ENCODE measurements at regions of chr3 and their contacts with region 1.

Region 1: DNA sequence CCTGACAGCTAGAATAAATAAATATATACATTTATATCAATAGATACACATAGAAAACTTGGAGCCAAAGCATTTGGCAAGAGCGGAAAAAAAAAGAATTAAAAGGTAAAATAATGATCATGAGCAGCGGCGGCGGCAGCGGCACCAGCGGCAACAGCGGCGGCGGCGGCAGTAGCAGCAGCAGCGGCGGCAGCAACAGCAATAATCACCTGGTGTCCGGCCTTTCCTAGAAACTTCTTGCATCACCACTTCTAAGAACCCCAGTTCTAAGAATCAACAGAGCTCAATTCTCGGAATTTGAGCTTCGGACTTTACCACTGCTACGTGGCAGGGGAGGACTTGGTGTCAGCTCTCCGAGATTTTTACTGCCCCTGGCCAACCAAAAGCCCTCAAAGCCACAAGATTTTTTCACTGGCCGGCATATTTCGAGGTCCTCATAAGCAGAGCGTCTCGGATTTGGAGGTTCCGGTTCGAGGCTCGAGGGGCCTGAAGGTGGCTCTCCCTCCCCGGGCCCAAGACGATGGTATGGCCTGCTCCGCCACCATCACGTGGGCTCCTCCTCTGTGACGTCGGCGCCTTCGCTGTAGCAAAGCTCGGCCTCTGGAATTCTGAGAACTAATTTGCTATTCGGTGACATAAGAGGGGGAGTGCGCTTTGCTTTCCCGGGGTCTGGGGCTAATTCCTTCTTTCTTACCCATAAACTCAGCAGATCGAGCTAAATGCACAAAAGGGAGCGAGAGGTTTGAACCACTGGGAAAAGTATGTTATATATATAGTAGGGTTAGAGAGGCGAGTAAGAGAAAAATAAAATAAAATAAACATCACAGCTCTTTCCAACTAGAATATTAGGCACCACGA is at the start of gene BCL6:
- DNase-seq: peak in 1 of 2 donors; percentile 98
- H3K4me3 ChIP-seq: peak within 1 kb of the TSS; percentile 52 to 77
- H3K27ac ChIP-seq: peak within 1 kb of the TSS; percentile 99
- H3K4me1 ChIP-seq: peaks cover 18% of the 10 kb centered on the region
- H3K27me3 ChIP-seq: no peaks in the 10 kb centered on the region
- CTCF ChIP-seq: peak in 1 of 3 experiments; percentile 15
- POLR2A ChIP-seq: peak; percentile 75 to 100
- total RNA-seq, gene BCL6: 133 TPM

Region 2: DNA sequence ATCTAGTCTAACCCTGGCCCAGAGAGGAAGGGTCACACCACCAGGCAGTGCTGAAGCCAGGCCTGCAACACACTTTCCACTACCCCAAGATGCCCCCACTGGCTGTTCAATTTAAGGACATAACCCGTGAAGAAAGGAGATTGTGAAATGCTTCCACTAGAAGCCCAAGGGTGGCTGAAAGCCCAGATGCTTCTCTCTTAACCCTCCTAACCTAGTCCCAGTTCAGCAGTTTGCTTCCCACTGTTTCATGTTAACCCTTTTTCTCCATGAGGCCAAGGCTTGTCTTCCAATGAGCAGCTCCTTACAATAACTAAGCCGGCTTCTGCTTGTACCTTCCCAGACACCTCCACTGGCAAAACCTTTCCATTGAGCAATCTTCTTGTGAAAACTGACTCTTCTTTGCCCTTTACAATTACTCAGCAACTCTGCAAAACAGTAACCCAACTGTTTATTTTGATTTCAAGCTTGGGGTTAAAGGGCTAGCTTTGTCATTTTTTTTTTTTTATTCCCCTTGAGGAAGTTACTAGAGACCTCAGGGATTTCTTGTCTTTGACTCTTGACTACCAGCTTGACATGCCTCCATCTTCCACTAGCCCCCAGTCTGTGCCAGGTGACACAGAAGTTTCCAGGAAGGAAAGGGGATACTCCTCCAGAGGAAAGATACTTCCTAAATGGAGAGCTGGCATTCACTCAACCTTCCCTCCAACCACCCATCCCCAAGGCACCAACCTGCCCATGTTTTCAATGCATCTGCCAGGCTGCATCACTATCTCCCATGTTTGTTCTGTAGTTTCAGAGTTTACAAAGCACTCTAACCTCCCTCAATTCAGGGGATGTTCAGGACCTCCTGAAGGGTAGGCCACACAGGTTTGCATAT is 209.9 kb after region 1 on chr3:
- intact Hi-C with region 1: loop called (anchors 5 kb)
- DNase-seq: peak in 1 of 2 donors; percentile 92
- H3K4me3 ChIP-seq: no peak overlapping the region
- H3K27ac ChIP-seq: no peak overlapping the region
- H3K4me1 ChIP-seq: no peaks in the 10 kb centered on the region
- H3K27me3 ChIP-seq: no peaks in the 10 kb centered on the region
- CTCF ChIP-seq: no peak
- POLR2A ChIP-seq: no peak

Region 3: DNA sequence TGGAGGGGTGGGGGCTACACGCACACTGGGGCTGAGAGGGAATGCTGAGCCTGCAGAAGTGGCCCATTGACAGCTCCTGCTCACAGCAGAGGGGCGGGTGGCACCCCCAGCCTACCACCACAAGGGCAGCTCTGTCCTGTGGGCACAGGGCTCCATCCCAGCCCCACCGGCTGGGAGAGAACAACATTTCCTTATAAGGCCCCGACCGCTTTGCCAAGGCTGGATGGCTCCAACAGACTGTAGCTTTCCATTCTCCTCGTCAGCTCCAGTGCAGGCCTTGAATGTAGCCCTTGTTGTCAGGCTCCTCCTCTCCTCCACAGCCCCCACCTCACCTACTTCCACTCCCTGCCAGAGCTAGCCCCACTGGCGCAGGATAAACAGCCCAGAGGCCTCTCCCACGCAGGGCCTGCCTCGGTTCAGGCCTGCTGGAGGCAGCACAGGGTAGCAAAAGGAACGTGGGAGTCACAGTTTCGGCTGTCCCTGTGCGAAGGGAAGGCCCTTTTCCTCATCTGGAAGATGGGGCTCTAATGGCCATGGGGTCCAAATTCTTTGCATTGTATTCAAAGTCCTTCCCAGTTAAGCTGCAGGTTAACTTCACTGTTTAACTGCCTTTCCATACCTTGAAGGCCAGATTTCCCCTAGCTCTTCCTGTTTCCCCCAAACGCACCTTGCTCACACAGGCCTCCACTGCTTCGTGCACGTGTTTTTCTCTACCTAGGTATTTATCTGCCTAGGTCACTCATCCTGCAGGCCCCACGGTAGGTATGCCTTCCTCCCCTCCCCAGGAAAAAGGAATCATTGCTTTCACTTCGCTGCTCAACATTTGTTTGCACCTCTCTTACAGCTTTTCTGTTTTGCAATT is 307.0 kb after region 1 on chr3:
- intact Hi-C with region 1: loop called (anchors 5 kb)
- DNase-seq: no peak
- H3K4me3 ChIP-seq: no peak overlapping the region
- H3K27ac ChIP-seq: peak overlapping the region; percentile 78
- H3K4me1 ChIP-seq: peaks cover 11% of the 10 kb centered on the region
- H3K27me3 ChIP-seq: no peaks in the 10 kb centered on the region
- CTCF ChIP-seq: no peak
- POLR2A ChIP-seq: no peak

Region 4: DNA sequence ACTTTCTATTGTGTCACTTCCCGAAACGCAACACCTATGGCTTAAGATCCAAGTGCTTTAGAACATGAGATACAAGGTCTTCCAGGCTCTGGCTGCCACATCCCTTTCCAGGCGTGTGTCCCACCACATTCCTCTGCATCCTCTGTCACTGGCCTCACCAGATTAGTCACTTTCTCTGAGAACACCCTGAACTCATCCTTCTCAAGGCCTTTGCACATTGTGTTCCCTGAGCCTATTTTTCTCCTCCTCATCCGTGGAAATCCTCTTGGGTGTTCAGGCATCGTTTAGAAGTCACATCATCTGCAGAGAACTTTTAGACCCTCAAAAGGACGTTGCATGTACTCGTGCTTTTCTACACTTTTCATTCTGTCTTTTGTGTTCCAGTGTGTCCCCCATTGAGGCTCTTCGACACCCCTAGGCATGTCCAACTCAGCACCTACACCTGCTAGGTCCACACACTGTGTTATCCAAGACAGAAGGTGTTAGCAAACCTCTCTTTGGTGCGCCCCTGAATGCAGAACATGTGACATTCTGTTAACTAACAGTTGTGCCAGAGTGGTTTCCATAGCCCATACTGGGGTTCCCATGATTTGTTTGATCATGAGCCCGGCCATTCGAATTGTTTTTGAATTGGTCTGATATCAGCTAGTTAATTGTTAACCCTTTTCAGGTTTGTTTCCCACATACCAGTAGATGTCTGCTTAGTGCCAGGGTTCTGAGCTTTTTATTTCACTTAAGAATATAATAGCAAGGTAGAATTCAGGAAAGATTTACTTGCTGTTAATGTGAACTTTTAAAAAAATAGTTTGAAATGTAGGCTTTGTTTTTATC is 475.8 kb after region 1 on chr3:
- intact Hi-C with region 1: loop called (anchors 10 kb)
- DNase-seq: no peak
- H3K4me3 ChIP-seq: no peak overlapping the region
- H3K27ac ChIP-seq: peak overlapping the region; percentile 38
- H3K4me1 ChIP-seq: peaks cover 58% of the 10 kb centered on the region
- H3K27me3 ChIP-seq: no peaks in the 10 kb centered on the region
- CTCF ChIP-seq: no peak
- POLR2A ChIP-seq: no peak

Region 5: GRCh38 chr3:188286087-188286513 is 540.7 kb after region 1 on chr3:
- intact Hi-C with region 1: loop called (anchors 10 kb)
- DNase-seq: peak in 1 of 2 donors; percentile 97
- H3K4me3 ChIP-seq: no peak overlapping the region
- H3K27ac ChIP-seq: peak overlapping the region; percentile 68
- H3K4me1 ChIP-seq: peaks cover 40% of the 10 kb centered on the region
- H3K27me3 ChIP-seq: no peaks in the 10 kb centered on the region
- CTCF ChIP-seq: no peak
- POLR2A ChIP-seq: no peak

Region 6: GRCh38 chr3:188788621-188789081 is 1043.2 kb after region 1 on chr3:
- intact Hi-C with region 1: loop called (anchors 10 kb)
- DNase-seq: no peak
- H3K4me3 ChIP-seq: no peak overlapping the region
- H3K27ac ChIP-seq: no peak overlapping the region
- H3K4me1 ChIP-seq: peaks cover 9% of the 10 kb centered on the region
- H3K27me3 ChIP-seq: no peaks in the 10 kb centered on the region
- CTCF ChIP-seq: no peak
- POLR2A ChIP-seq: no peak

Measured in vagina (tissue), 2 donors.